CD4-positive, alpha-beta T cell (primary cell): ENCODE measurements at regions of chr12 and their contacts with region 1.

Region 1: GRCh38 chr12:14803011-14803829 is at the starts of genes C12orf60 and WBP11:
- DNase-seq: peak; percentile 73 to 98 (median 80)
- ATAC-seq: peak; percentile 95
- H3K4me3 ChIP-seq: peak within 1 kb of the TSS; percentile 89
- H3K4me3 Mint-ChIP-seq: no peak within 1 kb of the TSS
- H3K27ac ChIP-seq: peak within 1 kb of the TSS; percentile 88 to 96
- H3K27ac Mint-ChIP-seq: no peak within 1 kb of the TSS
- H3K4me1 ChIP-seq: peaks cover 7% of the 10 kb centered on the region
- H3K4me1 Mint-ChIP-seq: peaks cover 18% of the 10 kb centered on the region
- H3K27me3 ChIP-seq: no peaks in the 10 kb centered on the region
- H3K27me3 Mint-ChIP-seq: no peaks in the 10 kb centered on the region
- CTCF ChIP-seq: no peak
- total RNA-seq, gene C12orf60: 0.11 to 0.22 TPM
- total RNA-seq, gene WBP11: 169 to 188 TPM

Region 2: GRCh38 chr12:14756334-14757143 is 46.7 kb before region 1 on chr12:
- CTCF ChIA-PET with region 1: no interaction called
- POLR2A ChIA-PET with region 1: no interaction called
- intact Hi-C with region 1: loop called in 1 of 2 experiments (anchors 10 kb)
- DNase-seq: peak in 3 of 14 experiments; percentile 22 to 38 (median 34)
- ATAC-seq: no peak
- H3K4me3 ChIP-seq: no peak overlapping the region
- H3K4me3 Mint-ChIP-seq: no peak overlapping the region
- H3K27ac ChIP-seq: no peak overlapping the region
- H3K27ac Mint-ChIP-seq: no peak overlapping the region
- H3K4me1 ChIP-seq: peaks cover 4% of the 10 kb centered on the region
- H3K4me1 Mint-ChIP-seq: peaks cover 40% of the 10 kb centered on the region
- H3K27me3 ChIP-seq: no peaks in the 10 kb centered on the region
- H3K27me3 Mint-ChIP-seq: no peaks in the 10 kb centered on the region
- CTCF ChIP-seq: no peak

Region 3: GRCh38 chr12:14774906-14775762 is 28.1 kb before region 1 on chr12:
- CTCF ChIA-PET with region 1: interaction called, 12 read pairs
- POLR2A ChIA-PET with region 1: interaction called, 375 read pairs
- intact Hi-C with region 1: loop called (anchors 1 to 2 kb)
- DNase-seq: peak in 11 of 14 experiments; percentile 2 to 56 (median 14)
- ATAC-seq: no peak
- H3K4me3 ChIP-seq: peak overlapping the region; percentile 83
- H3K4me3 Mint-ChIP-seq: peak overlapping the region; percentile 97
- H3K27ac ChIP-seq: peak overlapping the region; percentile 61 to 79
- H3K27ac Mint-ChIP-seq: peak overlapping the region; percentile 100
- H3K4me1 ChIP-seq: peaks cover 28% of the 10 kb centered on the region
- H3K4me1 Mint-ChIP-seq: peaks cover 63% of the 10 kb centered on the region
- H3K27me3 ChIP-seq: no peaks in the 10 kb centered on the region
- H3K27me3 Mint-ChIP-seq: no peaks in the 10 kb centered on the region
- CTCF ChIP-seq: no peak

Region 4: DNA sequence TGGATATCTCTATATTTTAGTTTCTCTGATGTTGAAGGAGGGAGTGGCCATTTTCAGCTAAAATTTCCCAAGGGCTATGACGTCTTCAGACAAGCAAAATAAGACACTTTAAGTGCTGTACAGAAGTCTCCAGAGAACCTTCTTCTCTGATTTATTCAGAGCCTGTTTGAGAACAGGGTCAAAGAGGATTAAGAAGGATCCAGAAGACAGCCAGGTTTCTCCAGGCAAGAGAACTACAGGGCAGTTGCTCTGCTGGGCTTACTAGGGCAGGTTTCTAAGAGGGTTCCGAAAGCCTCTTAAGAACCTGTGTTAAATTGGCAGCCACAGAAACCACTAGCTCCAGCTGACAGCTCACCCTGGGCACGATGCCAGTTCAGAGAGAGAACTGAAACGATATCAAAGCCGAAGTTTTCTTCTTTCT is 81.2 kb after region 1 on chr12:
- CTCF ChIA-PET with region 1: no interaction called
- POLR2A ChIA-PET with region 1: interaction called, 3 read pairs
- intact Hi-C with region 1: loop called in 1 of 2 experiments (anchors 1 kb)
- DNase-seq: peak; percentile 68 to 93 (median 82)
- ATAC-seq: peak; percentile 91
- H3K4me3 ChIP-seq: peak overlapping the region; percentile 7
- H3K4me3 Mint-ChIP-seq: peak overlapping the region; percentile 75
- H3K27ac ChIP-seq: no peak overlapping the region
- H3K27ac Mint-ChIP-seq: peak overlapping the region; percentile 86
- H3K4me1 ChIP-seq: peaks cover 11% of the 10 kb centered on the region
- H3K4me1 Mint-ChIP-seq: peaks cover 47% of the 10 kb centered on the region
- H3K27me3 ChIP-seq: no peaks in the 10 kb centered on the region
- H3K27me3 Mint-ChIP-seq: no peaks in the 10 kb centered on the region
- CTCF ChIP-seq: no peak

Region 5: GRCh38 chr12:14960548-14961465 is 157.6 kb after region 1 on chr12:
- CTCF ChIA-PET with region 1: no interaction called
- POLR2A ChIA-PET with region 1: interaction called, 8 read pairs
- intact Hi-C with region 1: loop called (anchors 5 kb)
- DNase-seq: peak in 12 of 14 experiments; percentile 45 to 79 (median 55)
- ATAC-seq: peak; percentile 40
- H3K4me3 ChIP-seq: peak overlapping the region; percentile 80
- H3K4me3 Mint-ChIP-seq: peak overlapping the region; percentile 97
- H3K27ac ChIP-seq: peak overlapping the region; percentile 89 to 90
- H3K27ac Mint-ChIP-seq: peak overlapping the region; percentile 94
- H3K4me1 ChIP-seq: peaks cover 41% of the 10 kb centered on the region
- H3K4me1 Mint-ChIP-seq: peaks cover 73% of the 10 kb centered on the region
- H3K27me3 ChIP-seq: no peaks in the 10 kb centered on the region
- H3K27me3 Mint-ChIP-seq: no peaks in the 10 kb centered on the region
- CTCF ChIP-seq: no peak

Region 6: DNA sequence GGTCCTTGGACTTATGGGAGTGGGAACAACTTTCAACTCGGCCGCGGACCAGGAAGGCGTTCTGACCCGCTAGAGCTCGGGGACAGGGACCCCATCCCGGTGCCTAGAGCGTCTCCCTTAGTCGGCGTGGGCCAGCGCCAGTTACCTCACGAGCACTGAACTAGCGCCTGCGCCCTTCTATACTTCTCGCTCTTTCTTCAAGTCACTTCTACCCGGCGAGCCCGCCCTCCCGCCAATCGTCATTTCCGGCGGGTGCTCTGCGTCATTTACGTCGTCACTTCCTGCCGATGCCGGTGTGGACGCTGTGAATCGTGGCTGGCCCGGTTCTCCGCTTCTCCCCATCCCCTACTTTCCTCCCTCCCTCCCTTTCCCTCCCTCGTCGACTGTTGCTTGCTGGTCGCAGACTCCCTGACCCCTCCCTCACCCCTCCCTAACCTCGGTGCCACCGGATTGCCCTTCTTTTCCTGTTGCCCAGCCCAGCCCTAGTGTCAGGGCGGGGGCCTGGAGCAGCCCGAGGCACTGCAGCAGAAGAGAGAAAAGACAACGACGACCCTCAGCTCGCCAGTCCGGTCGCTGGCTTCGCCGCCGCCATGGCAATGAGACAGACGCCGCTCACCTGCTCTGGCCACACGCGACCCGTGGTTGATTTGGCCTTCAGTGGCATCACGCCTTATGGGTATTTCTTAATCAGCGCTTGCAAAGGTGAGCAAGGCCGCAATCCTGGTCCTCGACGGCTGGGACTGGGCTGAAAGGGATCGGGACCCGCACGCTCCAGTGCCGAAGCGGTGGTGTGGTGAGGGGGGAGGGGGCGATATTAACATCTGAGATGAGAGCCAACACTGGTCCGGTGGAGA is 1079.1 kb after region 1 on chr12 and contains the start of gene STRAP:
- CTCF ChIA-PET with region 1: no interaction called
- POLR2A ChIA-PET with region 1: no interaction called
- intact Hi-C with region 1: loop called in 1 of 2 experiments (anchors 10 kb)
- DNase-seq: peak; percentile 91 to 98 (median 96)
- ATAC-seq: peak; percentile 94
- H3K4me3 ChIP-seq: peak within 1 kb of the TSS; percentile 92
- H3K4me3 Mint-ChIP-seq: peak within 1 kb of the TSS; percentile 97
- H3K27ac ChIP-seq: peak within 1 kb of the TSS; percentile 88 to 98
- H3K27ac Mint-ChIP-seq: peak within 1 kb of the TSS; percentile 100
- H3K4me1 ChIP-seq: peaks cover 20% of the 10 kb centered on the region
- H3K4me1 Mint-ChIP-seq: peaks cover 62% of the 10 kb centered on the region
- H3K27me3 ChIP-seq: no peaks in the 10 kb centered on the region
- H3K27me3 Mint-ChIP-seq: no peaks in the 10 kb centered on the region
- CTCF ChIP-seq: no peak
- total RNA-seq, gene STRAP: 138 to 140 TPM